Natural killer cell (primary cell): ENCODE measurements at regions of chr15 and their contacts with region 1.

Region 1: GRCh38 chr15:52179278-52180195 is 11.7 kb downstream of the GNB5 start:
- DNase-seq: peak; percentile 79 to 94
- ATAC-seq: peak; percentile 82 to 90 (median 84)
- H3K4me3 ChIP-seq: peak overlapping the region; percentile 72
- H3K4me3 Mint-ChIP-seq: peak overlapping the region; percentile 96
- H3K27ac ChIP-seq: peak overlapping the region; percentile 91
- H3K27ac Mint-ChIP-seq: peak overlapping the region; percentile 91 to 98
- H3K4me1 ChIP-seq: peaks cover 20% of the 10 kb centered on the region
- H3K4me1 Mint-ChIP-seq: peaks cover 27 to 28% of the 10 kb centered on the region in 2 donors
- H3K27me3 ChIP-seq: no peaks in the 10 kb centered on the region
- H3K27me3 Mint-ChIP-seq: no peaks in the 10 kb centered on the region
- CTCF ChIP-seq: no peak

Region 2: GRCh38 chr15:52018693-52019387 is 160.7 kb before region 1 on chr15 and contains the start of gene MAPK6:
- intact Hi-C with region 1: no loop called
- DNase-seq: peak; percentile 96 to 99
- ATAC-seq: peak; percentile 81 to 96 (median 85)
- H3K4me3 ChIP-seq: peak within 1 kb of the TSS; percentile 59
- H3K4me3 Mint-ChIP-seq: peak within 1 kb of the TSS; percentile 94
- H3K27ac ChIP-seq: peak within 1 kb of the TSS; percentile 94
- H3K27ac Mint-ChIP-seq: peak within 1 kb of the TSS; percentile 95 to 99
- H3K4me1 ChIP-seq: peaks cover 11% of the 10 kb centered on the region
- H3K4me1 Mint-ChIP-seq: peaks cover 32 to 36% of the 10 kb centered on the region in 2 donors
- H3K27me3 ChIP-seq: no peaks in the 10 kb centered on the region
- H3K27me3 Mint-ChIP-seq: peaks cover 0 to 3% of the 10 kb centered on the region in 2 donors
- CTCF ChIP-seq: no peak
- total RNA-seq, gene MAPK6: 33.0 to 36.2 (median 33.1) TPM

Region 3: DNA sequence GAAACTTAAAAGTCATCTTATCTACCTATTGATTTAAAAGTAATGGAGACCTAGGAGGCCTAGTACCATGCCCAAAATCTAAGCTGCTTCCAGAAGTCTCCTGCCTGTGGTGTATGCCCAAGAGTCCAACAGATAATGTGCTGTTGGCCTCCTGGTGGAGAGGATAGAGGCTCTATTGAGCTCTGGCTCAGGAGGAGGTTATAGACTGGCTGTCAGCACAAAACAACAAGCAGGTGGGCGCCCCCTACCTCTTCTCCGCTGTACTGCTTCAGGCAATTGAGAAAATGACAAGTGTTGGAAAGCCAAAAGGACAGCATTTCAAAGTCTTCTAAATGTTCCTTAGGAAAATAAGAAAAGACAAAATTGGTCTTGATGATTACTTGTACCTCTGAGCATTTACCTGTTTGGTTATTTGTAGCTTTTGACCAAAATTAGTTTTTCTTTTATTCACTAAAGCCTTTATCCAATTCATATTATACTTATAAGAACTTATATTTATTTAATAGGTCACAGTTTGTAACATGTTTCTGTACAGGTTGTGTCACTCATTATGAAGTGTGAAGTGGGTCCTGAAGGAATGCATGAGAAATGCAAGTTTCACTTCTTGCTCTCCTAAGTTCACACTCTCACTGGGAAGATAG is 28.9 kb after region 1 on chr15:
- intact Hi-C with region 1: loop called (anchors 2 kb)
- DNase-seq: peak; percentile 51 to 81
- ATAC-seq: peak; percentile 83 to 99 (median 94)
- H3K4me3 ChIP-seq: no peak overlapping the region
- H3K4me3 Mint-ChIP-seq: no peak overlapping the region
- H3K27ac ChIP-seq: no peak overlapping the region
- H3K27ac Mint-ChIP-seq: peak overlapping the region in 1 of 2 donors; percentile 4
- H3K4me1 ChIP-seq: no peaks in the 10 kb centered on the region
- H3K4me1 Mint-ChIP-seq: no peaks in the 10 kb centered on the region
- H3K27me3 ChIP-seq: no peaks in the 10 kb centered on the region
- H3K27me3 Mint-ChIP-seq: peaks cover 0 to 6% of the 10 kb centered on the region in 2 donors
- CTCF ChIP-seq: peak; percentile 77